Activated B cell treated with CpG ODN at 0.5 μM for 24 hours (primary cell): ENCODE measurements at regions of chr12 and their contacts with region 1.

Region 1: DNA sequence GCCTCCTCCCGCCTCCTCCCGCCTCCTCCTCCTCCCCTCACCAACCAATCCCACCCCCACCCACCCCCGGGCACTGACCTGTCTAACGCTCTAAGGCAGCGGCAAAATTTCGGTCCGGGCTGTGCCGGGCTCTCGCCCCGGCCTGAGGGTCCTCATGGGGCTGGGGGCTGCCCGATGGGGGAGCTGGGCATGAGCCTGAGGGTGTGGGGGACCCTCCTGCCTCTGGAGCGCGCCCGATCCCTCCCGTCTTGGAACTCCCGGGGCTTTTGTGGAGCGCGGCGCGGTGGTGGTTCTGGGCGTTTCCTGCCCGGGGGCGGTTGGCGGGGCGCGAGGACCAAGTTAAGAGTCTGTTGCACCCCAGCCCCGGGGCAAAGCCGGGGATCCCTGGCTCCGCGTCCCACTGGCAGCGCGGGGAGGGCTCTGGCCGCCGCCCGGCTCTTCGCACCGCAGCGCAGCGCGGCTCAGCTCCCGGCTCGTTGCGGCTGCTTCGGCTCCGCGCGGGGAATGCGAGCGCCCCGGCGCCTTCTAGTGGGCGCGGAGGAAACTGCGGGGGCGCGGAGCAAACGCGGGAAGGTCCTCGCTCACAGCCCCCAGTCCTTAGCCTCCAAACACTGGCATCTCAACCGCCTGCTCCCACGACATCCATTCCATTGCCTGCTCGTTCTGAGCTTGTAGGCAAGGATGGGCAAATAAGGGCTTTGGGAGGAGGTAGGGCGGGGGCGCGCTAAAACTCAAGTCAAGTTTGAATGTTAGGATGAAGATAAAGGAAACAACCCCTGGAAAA is at the start of gene B4GALNT1:
- DNase-seq: peak; percentile 75
- ATAC-seq: peak; percentile 94
- H3K4me3 Mint-ChIP-seq: peak within 1 kb of the TSS; percentile 73
- H3K27ac Mint-ChIP-seq: no peak within 1 kb of the TSS
- H3K4me1 Mint-ChIP-seq: peaks cover 12% of the 10 kb centered on the region
- H3K27me3 Mint-ChIP-seq: peaks cover 46% of the 10 kb centered on the region
- CTCF ChIP-seq: peak; percentile 27
- total RNA-seq, gene B4GALNT1: 0.31 and 0.51 TPM in 2 replicates

Region 2: DNA sequence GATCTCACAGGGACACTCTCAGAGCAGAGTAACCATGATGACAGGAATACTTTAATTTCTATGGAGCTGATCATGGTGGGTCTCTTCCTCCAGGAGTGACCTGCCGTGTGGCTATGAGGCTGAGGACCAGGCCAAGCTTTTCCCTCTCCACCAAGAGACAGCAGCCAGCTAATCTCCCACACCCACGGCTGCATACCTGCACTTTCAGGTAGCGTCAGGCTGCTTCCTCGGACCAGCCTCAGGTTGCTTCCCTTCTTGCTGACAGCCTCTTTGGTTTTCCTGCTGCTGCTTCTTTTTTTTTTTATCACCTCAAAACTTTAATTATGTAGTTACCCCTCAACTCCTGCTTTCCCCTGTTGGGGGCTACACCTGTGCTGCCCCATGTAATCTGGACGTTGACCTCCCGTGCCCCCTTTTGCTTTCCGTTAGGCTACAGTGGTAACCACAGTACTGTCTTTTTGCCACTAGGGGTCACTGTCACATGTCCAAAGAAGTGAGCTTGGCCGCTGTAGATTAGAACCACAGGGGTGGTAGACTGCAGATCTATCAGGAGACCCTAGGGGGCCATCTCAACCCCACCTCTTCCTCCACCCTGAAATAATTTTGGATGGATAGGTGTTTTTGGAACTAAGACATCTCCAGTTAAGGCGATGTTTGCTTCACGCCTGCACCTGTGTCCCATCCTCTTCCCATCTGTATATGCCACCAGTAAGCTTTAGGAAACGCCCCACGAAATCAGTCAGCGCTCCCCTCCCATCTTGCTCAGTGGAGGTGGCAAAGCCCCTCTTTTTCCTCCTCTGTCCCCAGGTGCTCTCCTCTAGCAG is 49.7 kb before region 1 on chr12:
- CTCF ChIA-PET with region 1: interaction called, 28 read pairs
- POLR2A ChIA-PET with region 1: no interaction called
- intact Hi-C with region 1: loop called (anchors 1 kb)
- DNase-seq: peak; percentile 24
- ATAC-seq: peak; percentile 100
- H3K4me3 Mint-ChIP-seq: no peak overlapping the region
- H3K27ac Mint-ChIP-seq: no peak overlapping the region
- H3K4me1 Mint-ChIP-seq: peaks cover 4% of the 10 kb centered on the region
- H3K27me3 Mint-ChIP-seq: peaks cover 12% of the 10 kb centered on the region
- CTCF ChIP-seq: peak; percentile 85

Region 3: DNA sequence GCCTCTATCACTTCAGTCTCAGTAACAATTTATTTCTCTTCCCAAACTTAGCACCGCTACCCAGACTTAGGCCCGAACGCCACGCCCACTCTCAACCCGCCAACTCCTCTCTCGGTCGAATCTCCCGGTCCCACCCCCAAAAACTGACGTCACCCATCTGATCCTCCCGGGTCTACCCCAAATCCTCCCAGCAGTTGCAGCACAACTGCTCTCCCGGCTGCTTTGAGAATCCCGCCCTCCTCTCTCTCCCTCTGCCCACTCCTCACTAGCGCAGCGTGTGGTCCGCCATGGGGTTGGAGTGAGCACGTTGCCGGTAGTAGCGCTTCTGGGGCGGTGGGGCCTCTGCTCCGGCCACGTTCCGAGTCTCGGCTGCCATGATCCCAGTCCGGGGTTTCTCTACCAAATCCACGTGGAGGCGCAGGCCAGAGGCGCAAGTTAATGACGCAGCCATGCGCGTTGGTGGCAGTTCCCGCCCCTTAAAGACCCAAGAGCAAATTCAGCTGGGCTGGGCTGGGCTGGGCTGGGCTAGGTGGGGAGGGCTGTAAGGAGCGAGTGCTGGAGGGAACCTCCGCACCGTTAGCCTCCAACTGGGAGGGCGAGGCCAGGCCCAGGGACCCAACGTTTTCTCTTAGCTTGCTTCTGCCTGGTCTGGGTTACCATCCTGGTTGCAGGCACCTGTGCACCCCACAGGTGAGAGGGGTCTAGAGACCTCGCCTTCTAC is 139.0 kb after region 1 on chr12 and contains the start of gene METTL1:
- CTCF ChIA-PET with region 1: no interaction called
- POLR2A ChIA-PET with region 1: no interaction called
- intact Hi-C with region 1: no loop called
- DNase-seq: peak; percentile 81
- ATAC-seq: peak; percentile 91
- H3K4me3 Mint-ChIP-seq: peak within 1 kb of the TSS; percentile 98
- H3K27ac Mint-ChIP-seq: peak within 1 kb of the TSS; percentile 98
- H3K4me1 Mint-ChIP-seq: peaks cover 20% of the 10 kb centered on the region
- H3K27me3 Mint-ChIP-seq: peaks cover under 1% of the 10 kb centered on the region
- CTCF ChIP-seq: no peak
- total RNA-seq, gene METTL1: 32.2 and 40.7 TPM in 2 replicates

Region 4: GRCh38 chr12:59559696-59560095 is 1926.8 kb after region 1 on chr12:
- CTCF ChIA-PET with region 1: no interaction called
- POLR2A ChIA-PET with region 1: no interaction called
- intact Hi-C with region 1: no loop called
- DNase-seq: no peak
- ATAC-seq: no peak
- H3K4me3 Mint-ChIP-seq: no peak overlapping the region
- H3K27ac Mint-ChIP-seq: no peak overlapping the region
- H3K4me1 Mint-ChIP-seq: no peaks in the 10 kb centered on the region
- H3K27me3 Mint-ChIP-seq: peaks cover 7% of the 10 kb centered on the region
- CTCF ChIP-seq: no peak